ENCODE measurements at regions of chr3 and their contacts with region 1.

Region 1: DNA sequence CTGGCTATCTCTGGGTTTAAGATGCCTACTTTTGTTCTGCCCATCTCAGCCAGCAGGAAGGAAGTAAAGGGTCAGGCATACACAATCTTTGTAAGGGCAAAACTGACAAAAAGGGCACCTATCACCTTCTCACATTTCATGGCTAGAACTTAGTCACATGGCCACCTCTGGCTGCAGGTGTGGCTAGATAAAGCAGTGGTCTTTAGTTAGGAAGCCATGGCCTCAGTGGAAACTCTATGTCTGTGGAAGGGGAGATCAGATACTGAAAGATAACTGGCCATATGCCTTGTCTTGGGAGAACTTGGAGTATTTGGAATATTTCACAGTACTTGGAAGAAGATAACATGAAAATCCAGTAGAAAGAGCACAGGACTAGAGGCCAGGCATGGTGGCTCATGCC is 80.7 kb upstream of the TBL1XR1 start:
- DNase-seq: no peak
- H3K4me3 ChIP-seq: no peak overlapping the region
- H3K27ac ChIP-seq: no peak overlapping the region
- H3K4me1 ChIP-seq: peaks cover 34% of the 10 kb centered on the region
- H3K27me3 ChIP-seq: no peaks in the 10 kb centered on the region
- CTCF ChIP-seq: no peak

Region 2: DNA sequence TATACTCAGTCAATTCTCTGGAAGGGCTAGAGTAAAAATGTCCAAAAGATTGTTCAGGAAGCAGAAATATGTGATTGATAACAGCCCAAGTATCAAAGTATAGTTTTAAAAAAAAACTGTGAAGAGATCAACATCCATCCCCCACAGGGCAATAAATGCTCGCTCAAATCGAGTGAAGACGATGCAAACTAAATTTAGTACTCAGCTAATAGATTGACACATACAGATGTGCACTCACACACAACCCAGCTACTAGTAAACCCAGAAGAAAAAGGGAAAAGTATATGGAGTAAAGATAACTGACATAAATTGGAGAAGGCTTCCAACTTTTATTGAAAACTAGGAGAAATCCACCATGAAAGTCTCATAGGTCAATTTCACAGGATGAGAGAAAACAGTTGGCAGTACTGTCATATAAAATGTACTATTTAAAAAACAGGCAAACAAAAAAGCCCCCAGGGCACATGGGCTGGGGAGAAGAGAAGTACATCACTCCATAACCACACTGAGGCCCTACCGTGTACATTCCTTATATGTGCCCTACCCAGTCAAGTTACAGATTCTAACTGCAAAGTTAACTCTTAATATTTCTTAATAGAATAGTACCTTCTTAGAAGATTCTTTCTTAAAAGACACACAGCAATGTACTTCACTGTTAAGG is 206.4 kb before region 1 on chr3:
- CTCF ChIA-PET with region 1: no interaction called
- POLR2A ChIA-PET with region 1: interaction called, 15 read pairs
- intact Hi-C with region 1: no loop called
- DNase-seq: no peak
- H3K4me3 ChIP-seq: no peak overlapping the region
- H3K27ac ChIP-seq: no peak overlapping the region
- H3K4me1 ChIP-seq: peaks cover 12% of the 10 kb centered on the region; the same call in 1 of the 2 replicates
- H3K27me3 ChIP-seq: no peaks in the 10 kb centered on the region
- CTCF ChIP-seq: no peak

Measured in PC-9 (cell line).